Ovary (tissue), 10 donors: ENCODE measurements at regions of chr2 and their contacts with region 1.

Region 1: DNA sequence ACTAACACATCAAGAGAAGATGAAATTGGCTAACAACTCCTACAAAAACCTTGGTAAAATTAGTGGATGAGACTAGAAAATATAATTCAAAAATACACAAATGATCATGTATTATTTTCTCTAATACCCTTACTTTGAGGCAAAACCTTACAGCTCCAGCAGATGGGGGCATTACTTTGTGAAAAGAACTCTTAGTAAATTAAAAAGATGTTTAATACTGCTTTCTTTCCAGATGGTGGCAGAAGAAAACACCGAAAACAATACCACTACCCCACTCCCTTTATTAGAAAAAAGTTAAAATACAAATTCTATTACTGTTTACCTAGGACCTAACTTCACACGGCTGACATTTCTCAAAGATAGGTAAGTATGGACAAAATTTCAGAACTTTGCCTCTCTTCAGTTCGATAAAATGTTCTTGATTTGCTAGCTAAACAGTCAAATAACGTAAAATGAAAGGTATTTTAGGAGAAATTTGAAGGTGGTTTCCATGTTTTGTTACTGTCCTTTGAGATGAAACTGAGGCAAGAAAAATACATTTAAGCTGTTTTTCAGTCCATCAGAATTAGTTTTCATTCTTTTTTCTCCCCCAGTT is 30.6 kb downstream of the ORC4 start:
- DNase-seq: peak in 1 of 5 donors; percentile 31
- H3K4me3 ChIP-seq: no peak overlapping the region
- H3K27ac ChIP-seq: no peak overlapping the region
- H3K4me1 ChIP-seq: no peaks in the 10 kb centered on the region
- H3K27me3 ChIP-seq: no peaks in the 10 kb centered on the region
- CTCF ChIP-seq: peak; percentile 17 to 71 (median 60)
- EP300 ChIP-seq: no peak
- POLR2A ChIP-seq: no peak

Region 2: DNA sequence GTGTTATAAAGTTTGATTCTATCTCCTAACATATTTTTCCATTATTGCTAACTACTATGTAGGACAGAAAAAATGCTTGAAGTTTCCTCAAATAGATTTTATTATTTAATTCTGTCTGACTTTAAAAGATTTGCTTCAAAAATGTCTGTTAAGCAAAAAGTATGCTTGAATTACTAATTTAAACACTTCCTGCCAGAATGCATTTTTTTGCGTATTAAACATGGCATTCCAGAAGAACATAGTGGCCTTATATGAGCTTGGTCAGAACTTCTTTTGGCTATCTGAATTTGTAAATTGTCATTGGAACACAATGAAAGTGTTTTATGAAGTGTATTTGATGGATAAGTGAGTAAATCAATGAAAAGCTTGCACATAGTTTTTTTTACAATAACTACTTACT is 68.7 kb after region 1 on chr2:
- intact Hi-C with region 1: no loop called
- DNase-seq: no peak
- H3K4me3 ChIP-seq: no peak overlapping the region
- H3K27ac ChIP-seq: no peak overlapping the region
- H3K4me1 ChIP-seq: no peaks in the 10 kb centered on the region
- H3K27me3 ChIP-seq: no peaks in the 10 kb centered on the region
- CTCF ChIP-seq: no peak
- EP300 ChIP-seq: no peak
- POLR2A ChIP-seq: no peak

Region 3: DNA sequence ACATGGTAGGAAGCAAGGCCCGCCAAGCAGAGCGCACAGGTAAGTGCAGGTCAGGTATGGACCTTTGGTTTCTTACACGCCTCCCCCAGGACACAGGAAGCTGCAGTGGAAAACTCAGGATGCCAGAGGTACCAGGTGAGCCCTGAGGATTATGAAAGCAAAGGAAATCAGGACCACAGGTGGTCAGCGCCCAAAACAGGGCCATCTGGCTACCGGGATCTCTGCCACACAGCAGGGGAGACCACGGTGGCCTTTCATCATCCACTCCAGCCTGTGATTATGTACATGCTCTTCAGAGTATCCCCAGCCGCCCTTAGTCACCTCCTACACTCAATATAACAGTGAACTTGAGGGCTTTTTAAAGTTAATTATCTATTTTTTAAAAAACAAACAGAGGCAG is 529.1 kb after region 1 on chr2:
- intact Hi-C with region 1: loop called in 2 of 4 experiments (anchors 10 kb)
- DNase-seq: no peak
- H3K4me3 ChIP-seq: no peak overlapping the region
- H3K27ac ChIP-seq: no peak overlapping the region
- H3K4me1 ChIP-seq: no peaks in the 10 kb centered on the region
- H3K27me3 ChIP-seq: no peaks in the 10 kb centered on the region
- CTCF ChIP-seq: no peak
- EP300 ChIP-seq: no peak
- POLR2A ChIP-seq: no peak

Region 4: DNA sequence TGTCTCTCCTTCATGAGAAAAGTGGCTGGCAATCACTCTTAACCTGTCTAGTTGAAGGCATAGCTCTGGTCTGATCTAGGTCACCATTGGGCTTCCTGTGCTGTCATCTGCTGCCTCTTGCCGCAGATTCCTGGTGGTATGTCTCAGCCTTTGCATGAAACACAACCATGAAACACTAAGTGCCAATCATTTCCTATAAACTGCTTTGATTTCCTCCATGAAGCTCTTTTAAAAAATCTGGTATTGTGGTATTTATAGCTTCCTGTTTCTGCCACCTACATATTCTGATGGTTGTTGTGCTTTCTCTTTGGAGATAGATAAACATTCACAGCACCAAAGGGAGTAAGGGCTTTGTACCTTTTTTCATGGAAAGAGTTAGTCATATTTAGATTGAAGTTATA is 534.6 kb after region 1 on chr2:
- intact Hi-C with region 1: loop called in 2 of 4 experiments (anchors 10 kb)
- DNase-seq: no peak
- H3K4me3 ChIP-seq: no peak overlapping the region
- H3K27ac ChIP-seq: no peak overlapping the region
- H3K4me1 ChIP-seq: no peaks in the 10 kb centered on the region
- H3K27me3 ChIP-seq: no peaks in the 10 kb centered on the region
- CTCF ChIP-seq: no peak
- EP300 ChIP-seq: no peak
- POLR2A ChIP-seq: no peak